Activated CD8-positive, alpha-beta T cell treated with anti-CD3 and anti-CD28 coated beads for 36 hours (primary cell): ENCODE measurements at regions of chr17 and their contacts with region 1.

Region 1: GRCh38 chr17:50161023-50161910 is 4.5 kb upstream of the SGCA start:
- DNase-seq: peak; percentile 96
- ATAC-seq: peak; percentile 92
- H3K4me3 Mint-ChIP-seq: peak overlapping the region; percentile 65
- H3K27ac Mint-ChIP-seq: peak overlapping the region; percentile 97
- H3K4me1 Mint-ChIP-seq: peaks cover 44% of the 10 kb centered on the region
- H3K27me3 Mint-ChIP-seq: no peaks in the 10 kb centered on the region
- CTCF ChIP-seq: peak; percentile 84

Region 2: DNA sequence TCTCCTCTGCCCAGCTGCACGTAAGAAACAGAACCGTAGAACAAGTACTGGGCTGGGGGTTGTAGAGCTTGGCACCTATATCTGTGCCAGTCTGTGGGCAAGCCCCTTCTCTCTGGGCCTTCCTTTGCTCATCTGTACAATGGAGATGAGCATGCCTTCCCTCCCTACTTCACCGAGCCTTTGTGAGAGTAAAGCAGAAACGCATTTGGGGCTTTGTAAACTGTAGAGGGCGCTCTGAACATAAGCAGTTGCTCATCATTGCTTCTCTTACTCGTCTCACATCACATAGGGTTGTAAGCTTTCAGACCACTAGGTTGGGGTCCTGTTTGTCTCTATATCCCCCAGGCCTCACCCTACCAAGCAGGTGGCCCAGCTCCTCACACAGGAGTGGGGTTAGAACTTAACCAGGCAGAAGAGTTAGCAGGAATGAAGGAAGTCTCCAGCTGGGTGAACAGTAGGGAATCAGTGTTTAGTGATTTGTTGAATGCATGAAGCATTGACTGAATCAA is 46.4 kb before region 1 on chr17:
- CTCF ChIA-PET with region 1: interaction called, 45 read pairs
- POLR2A ChIA-PET with region 1: interaction called, 3 read pairs
- intact Hi-C with region 1: loop called (anchors 10 kb)
- DNase-seq: peak; percentile 75
- ATAC-seq: peak; percentile 69
- H3K4me3 Mint-ChIP-seq: no peak overlapping the region
- H3K27ac Mint-ChIP-seq: no peak overlapping the region
- H3K4me1 Mint-ChIP-seq: peaks cover 12% of the 10 kb centered on the region
- H3K27me3 Mint-ChIP-seq: peaks cover 29% of the 10 kb centered on the region
- CTCF ChIP-seq: peak; percentile 63

Region 3: GRCh38 chr17:50129728-50130558 is 31.3 kb before region 1 on chr17 and contains the start of gene SAMD14:
- CTCF ChIA-PET with region 1: interaction called, 10 read pairs
- POLR2A ChIA-PET with region 1: interaction called, 4 read pairs
- intact Hi-C with region 1: no loop called
- DNase-seq: peak; percentile 61
- ATAC-seq: peak; percentile 53
- H3K4me3 Mint-ChIP-seq: peak within 1 kb of the TSS; percentile 58
- H3K27ac Mint-ChIP-seq: peak within 1 kb of the TSS; percentile 62
- H3K4me1 Mint-ChIP-seq: peaks cover 22% of the 10 kb centered on the region
- H3K27me3 Mint-ChIP-seq: peaks cover 23% of the 10 kb centered on the region
- CTCF ChIP-seq: no peak
- total RNA-seq, gene SAMD14: 0.47 to 1.3 TPM

Region 4: GRCh38 chr17:50177983-50178834 is 16.9 kb after region 1 on chr17:
- CTCF ChIA-PET with region 1: interaction called, 11 read pairs
- POLR2A ChIA-PET with region 1: interaction called, 9 read pairs
- intact Hi-C with region 1: no loop called
- DNase-seq: peak; percentile 70
- ATAC-seq: peak; percentile 93
- H3K4me3 Mint-ChIP-seq: no peak overlapping the region
- H3K27ac Mint-ChIP-seq: peak overlapping the region; percentile 2
- H3K4me1 Mint-ChIP-seq: peaks cover 6% of the 10 kb centered on the region
- H3K27me3 Mint-ChIP-seq: no peaks in the 10 kb centered on the region
- CTCF ChIP-seq: peak; percentile 42

Region 5: DNA sequence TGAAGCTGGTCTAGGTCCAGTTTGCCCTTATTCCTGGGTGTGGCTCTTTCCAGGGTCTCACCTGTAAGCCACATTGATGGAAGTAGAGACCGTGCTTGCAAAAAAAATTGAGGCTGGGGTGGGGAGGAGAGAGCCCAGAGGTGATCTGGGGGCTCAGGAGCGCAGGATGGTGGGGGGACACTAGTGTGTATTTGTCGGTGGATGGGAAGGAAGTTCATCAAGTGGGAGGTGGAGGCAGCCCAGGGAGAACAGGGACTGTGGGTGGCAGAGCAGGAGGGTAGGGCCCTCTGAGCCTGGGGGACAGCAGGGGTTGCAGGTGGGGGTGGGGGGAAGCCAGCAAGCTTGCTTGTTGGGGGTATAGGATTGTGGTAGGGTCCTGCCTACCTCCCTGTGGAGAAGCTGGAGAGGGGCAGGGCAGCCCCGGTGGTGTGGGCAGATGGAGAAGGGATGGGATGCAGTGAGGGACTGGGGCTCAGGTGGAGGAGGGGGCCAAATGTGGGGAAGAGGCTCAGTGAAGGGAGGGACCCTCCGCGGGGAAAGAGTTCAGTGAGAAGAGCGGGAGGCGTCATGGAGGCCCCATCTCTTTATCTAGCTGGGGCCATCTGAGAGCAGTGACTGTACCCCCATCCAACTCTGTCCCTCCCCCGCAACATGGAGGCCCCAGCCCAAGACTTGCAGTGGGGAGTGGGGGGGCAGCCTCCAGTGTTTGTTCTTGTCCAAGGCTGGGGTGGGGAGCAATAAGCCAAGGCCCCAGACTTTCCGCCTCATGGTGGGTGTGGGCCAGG is 95.8 kb after region 1 on chr17:
- CTCF ChIA-PET with region 1: no interaction called
- POLR2A ChIA-PET with region 1: no interaction called
- intact Hi-C with region 1: no loop called
- DNase-seq: no peak
- ATAC-seq: no peak
- H3K4me3 Mint-ChIP-seq: no peak overlapping the region
- H3K27ac Mint-ChIP-seq: no peak overlapping the region
- H3K4me1 Mint-ChIP-seq: no peaks in the 10 kb centered on the region
- H3K27me3 Mint-ChIP-seq: no peaks in the 10 kb centered on the region
- CTCF ChIP-seq: no peak